Naive thymus-derived CD4-positive, alpha-beta T cell (primary cell): ENCODE measurements at regions of chr6 and their contacts with region 1.

Region 1: DNA sequence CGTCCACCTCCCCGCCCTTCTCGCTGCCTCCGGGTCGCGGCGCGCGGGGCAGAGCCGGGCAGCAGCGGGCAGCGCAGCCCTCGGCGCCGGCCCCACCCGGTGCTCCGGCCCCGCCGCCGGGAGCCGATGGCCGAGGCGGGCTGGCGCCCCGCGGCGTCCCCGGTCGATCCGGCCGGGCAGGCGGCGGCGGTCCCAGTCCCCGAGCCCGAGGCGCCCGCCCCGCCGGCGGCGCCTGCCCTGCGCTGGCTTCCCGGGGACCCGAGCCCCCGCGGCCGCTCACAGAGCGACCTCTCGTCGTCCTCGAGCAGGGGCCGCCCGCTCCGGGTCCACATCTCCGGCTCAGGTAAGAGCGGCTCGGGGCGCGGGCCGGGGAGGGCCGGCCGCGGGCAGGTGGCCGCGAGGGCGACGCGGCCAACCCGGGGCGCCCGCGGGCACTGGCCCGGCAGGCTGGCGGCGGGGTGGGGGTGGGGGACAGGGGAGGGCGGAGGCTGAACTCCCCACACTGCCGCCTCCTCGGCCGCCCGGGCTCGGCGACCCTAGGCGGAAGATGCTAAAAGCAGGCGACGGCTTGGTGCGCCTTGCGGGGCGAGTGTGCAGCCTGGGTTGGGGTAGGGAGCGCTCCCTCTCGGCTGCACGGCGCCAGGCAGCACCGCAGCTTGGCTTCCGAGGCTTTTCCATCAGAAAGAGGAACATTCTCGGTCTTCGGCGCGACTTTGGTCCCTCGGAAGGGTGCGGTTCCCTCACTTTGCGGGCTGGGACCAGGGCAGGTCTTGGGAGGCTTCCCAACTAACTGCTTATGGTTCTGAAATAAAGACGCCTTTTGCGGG is 25.6 kb upstream of the FUCA2 start:
- DNase-seq: peak; percentile 37 to 69 (median 57)
- ATAC-seq: peak; percentile 83
- H3K4me3 ChIP-seq: peak overlapping the region; percentile 74
- H3K4me3 Mint-ChIP-seq: peak overlapping the region; percentile 81 to 92 (median 84)
- H3K27ac ChIP-seq: peak overlapping the region; percentile 60
- H3K27ac Mint-ChIP-seq: peak overlapping the region in 7 of 9 donors; percentile 59 to 89 (median 76)
- H3K4me1 ChIP-seq: peaks cover 27 to 28% of the 10 kb centered on the region in 2 donors
- H3K4me1 Mint-ChIP-seq: peaks cover 17 to 47% (median 37%) of the 10 kb centered on the region in 7 donors
- H3K27me3 ChIP-seq: no peaks in the 10 kb centered on the region
- H3K27me3 Mint-ChIP-seq: no peaks in the 10 kb centered on the region

Region 2: DNA sequence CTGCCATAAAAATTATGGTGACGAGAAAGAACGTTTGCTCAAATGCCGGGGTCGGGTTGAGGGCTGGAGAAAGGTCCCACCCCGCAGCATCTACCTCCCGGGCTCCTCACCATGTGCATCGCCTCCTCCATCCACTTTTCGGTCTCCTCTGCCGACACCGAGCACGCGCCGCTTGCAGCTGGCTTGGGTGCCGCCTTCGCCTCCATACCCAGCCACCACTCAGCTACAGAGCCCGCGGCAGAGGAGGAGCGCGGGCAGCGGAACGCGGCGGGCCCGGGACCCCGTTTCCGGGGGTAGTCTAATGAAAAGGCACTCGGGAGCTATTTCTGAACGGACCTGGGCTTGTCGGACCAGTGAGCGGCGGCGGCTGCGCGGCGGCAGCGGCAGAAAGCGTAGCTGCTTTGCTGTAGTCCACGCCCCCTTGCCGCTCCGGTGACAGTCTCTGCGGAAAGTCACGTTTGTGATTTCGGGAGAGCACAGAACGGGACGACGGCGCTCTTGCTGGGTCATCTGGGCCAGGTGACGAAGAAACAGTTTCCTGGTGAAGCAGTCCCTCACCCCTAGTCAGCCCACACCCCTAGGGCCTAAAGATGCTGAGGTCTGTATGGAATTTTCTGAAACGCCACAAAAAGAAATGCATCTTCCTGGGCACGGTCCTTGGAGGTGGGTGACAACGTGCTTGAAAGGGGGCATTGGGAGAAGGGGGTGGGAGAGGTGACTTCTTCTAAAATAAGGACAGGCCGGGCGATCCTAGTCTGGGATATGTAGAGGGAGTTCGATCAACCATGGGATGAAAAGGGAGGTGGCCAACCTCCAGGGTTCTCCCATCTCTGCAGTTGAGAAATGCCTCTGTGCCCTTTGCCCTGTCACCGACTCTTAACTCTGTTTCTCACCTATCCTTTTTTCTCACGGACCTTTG is 86.4 kb before region 1 on chr6 and contains the starts of genes ADAT2 and PEX3:
- CTCF ChIA-PET with region 1: no interaction called
- POLR2A ChIA-PET with region 1: interaction called, 6 read pairs
- intact Hi-C with region 1: loop called (anchors 1 kb)
- DNase-seq: peak; percentile 87 to 95 (median 94)
- ATAC-seq: peak; percentile 98
- H3K4me3 ChIP-seq: peak within 1 kb of the TSS; percentile 89
- H3K4me3 Mint-ChIP-seq: peak within 1 kb of the TSS; percentile 84 to 100 (median 99)
- H3K27ac ChIP-seq: peak within 1 kb of the TSS; percentile 80
- H3K27ac Mint-ChIP-seq: peak within 1 kb of the TSS; percentile 93 to 99 (median 96)
- H3K4me1 ChIP-seq: peaks cover 14 to 18% of the 10 kb centered on the region in 2 donors
- H3K4me1 Mint-ChIP-seq: peaks cover 20 to 61% (median 49%) of the 10 kb centered on the region in 7 donors
- H3K27me3 ChIP-seq: no peaks in the 10 kb centered on the region
- H3K27me3 Mint-ChIP-seq: no peaks in the 10 kb centered on the region
- total RNA-seq, gene ADAT2: 18.4 to 25.8 (median 20.8) TPM
- total RNA-seq, gene PEX3: 10.9 to 28.8 (median 19.1) TPM

Region 3: GRCh38 chr6:143549221-143549941 is 12.3 kb after region 1 on chr6:
- CTCF ChIA-PET with region 1: interaction called, 4 read pairs
- POLR2A ChIA-PET with region 1: interaction called, 6 read pairs
- intact Hi-C with region 1: loop called (anchors 1 kb)
- DNase-seq: peak in 1 of 9 donors; percentile 45
- ATAC-seq: peak; percentile 47
- H3K4me3 ChIP-seq: no peak overlapping the region
- H3K4me3 Mint-ChIP-seq: peak overlapping the region in 3 of 10 donors; percentile 4 to 43 (median 10)
- H3K27ac ChIP-seq: no peak overlapping the region
- H3K27ac Mint-ChIP-seq: peak overlapping the region in 4 of 9 donors; percentile 20 to 66 (median 66)
- H3K4me1 ChIP-seq: peaks cover 43 to 71% of the 10 kb centered on the region in 2 donors
- H3K4me1 Mint-ChIP-seq: peaks cover 37 to 86% (median 73%) of the 10 kb centered on the region in 7 donors
- H3K27me3 ChIP-seq: no peaks in the 10 kb centered on the region
- H3K27me3 Mint-ChIP-seq: no peaks in the 10 kb centered on the region

Region 4: GRCh38 chr6:143556529-143556928 is 19.5 kb after region 1 on chr6:
- CTCF ChIA-PET with region 1: interaction called, 4 read pairs
- POLR2A ChIA-PET with region 1: interaction called, 3 read pairs
- intact Hi-C with region 1: loop called in 1 of 2 experiments (anchors 2 kb)
- DNase-seq: no peak
- ATAC-seq: no peak
- H3K4me3 ChIP-seq: no peak overlapping the region
- H3K4me3 Mint-ChIP-seq: peak overlapping the region in 2 of 10 donors; percentile 27 to 76
- H3K27ac ChIP-seq: no peak overlapping the region
- H3K27ac Mint-ChIP-seq: peak overlapping the region in 2 of 9 donors; percentile 27 to 90
- H3K4me1 ChIP-seq: peaks cover 20 to 62% of the 10 kb centered on the region in 2 donors
- H3K4me1 Mint-ChIP-seq: peaks cover 33 to 62% (median 50%) of the 10 kb centered on the region in 7 donors
- H3K27me3 ChIP-seq: no peaks in the 10 kb centered on the region
- H3K27me3 Mint-ChIP-seq: no peaks in the 10 kb centered on the region